ENCODE measurements at regions of chr12 and their contacts with region 1.

Region 1: DNA sequence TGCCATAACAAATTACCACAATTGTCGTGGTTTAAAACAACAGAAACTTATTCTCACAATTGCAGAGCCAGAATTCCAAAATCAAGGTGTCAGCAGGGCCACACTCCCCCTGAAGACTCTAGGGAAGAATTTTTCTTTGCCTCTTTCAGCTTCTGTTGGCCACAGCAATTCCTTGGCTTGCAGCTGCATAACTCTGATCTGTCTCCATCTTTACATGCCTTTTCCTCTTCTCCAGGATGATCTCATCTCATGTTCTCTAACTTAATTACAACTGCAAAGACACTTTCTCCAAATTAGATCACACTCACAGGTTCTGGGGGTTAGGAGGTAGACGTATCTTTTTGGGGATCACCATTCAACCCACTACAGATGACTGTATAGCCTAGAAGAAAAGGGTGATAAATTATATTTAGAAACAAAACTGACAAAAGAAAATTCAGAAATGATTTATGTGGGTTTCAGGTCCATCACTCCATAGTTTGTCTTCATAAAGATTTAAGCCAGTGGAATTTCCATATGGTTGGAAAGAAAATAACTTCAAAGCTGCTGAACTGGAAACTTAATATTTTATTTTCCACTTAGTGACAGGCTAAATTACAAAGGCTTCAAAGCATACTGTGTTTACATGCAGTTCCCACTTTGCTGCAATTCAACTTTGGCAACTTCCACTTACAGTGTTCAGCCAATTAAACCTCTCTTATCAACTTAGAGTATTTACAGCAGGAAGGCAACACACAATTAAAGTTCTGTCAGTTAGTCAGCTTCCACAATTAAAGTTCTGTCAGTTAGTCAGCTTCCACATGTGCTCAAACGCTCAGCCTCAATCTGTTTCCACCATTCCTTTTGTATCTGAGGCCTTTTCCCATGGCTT is 213.3 kb downstream of the EPS8 start:
- DNase-seq: no peak
- ATAC-seq: no peak
- H3K4me3 ChIP-seq: no peak overlapping the region
- H3K4me3 Mint-ChIP-seq: no peak overlapping the region
- H3K27ac ChIP-seq: no peak overlapping the region
- H3K27ac Mint-ChIP-seq: no peak overlapping the region
- H3K4me1 ChIP-seq: peaks cover 4% of the 10 kb centered on the region
- H3K4me1 Mint-ChIP-seq: peaks cover 24% of the 10 kb centered on the region
- H3K27me3 ChIP-seq: no peaks in the 10 kb centered on the region
- H3K27me3 Mint-ChIP-seq: no peaks in the 10 kb centered on the region
- CTCF ChIP-seq: no peak

Region 2: DNA sequence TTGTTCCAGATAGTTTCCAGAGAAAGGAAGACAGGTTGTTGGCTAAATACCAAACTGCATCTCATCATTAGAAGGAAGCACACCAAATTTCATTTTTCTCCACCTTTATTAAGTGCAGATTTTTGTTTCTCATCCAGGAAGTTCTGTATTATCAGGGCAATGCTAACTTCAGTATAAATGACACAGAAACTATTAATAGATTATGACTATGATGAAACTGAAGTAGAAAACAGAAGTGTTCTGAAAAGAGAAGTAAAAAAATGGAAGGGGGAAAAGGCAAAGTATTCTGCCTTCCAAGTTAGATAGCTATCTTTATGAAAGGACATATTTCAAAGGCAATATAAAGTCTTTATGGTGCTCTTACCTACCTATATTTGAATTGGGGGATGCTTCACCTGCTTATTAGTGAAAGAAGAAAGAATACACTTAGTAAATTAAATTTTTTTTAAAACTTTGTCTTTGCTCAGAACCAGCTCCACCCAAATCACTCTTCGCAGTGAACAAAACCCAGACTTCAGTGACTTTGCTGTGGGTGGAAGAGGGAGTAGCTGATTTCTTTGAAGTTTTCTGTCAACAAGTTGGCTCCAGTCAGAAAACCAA is 29.7 kb before region 1 on chr12:
- CTCF ChIA-PET with region 1: interaction called, 4 read pairs
- POLR2A ChIA-PET with region 1: interaction called, 84 read pairs
- intact Hi-C with region 1: no loop called
- DNase-seq: peak in 10 of 14 experiments; percentile 21 to 81 (median 45)
- ATAC-seq: peak; percentile 93
- H3K4me3 ChIP-seq: peak overlapping the region; percentile 19
- H3K4me3 Mint-ChIP-seq: peak overlapping the region; percentile 83
- H3K27ac ChIP-seq: peak overlapping the region; percentile 59 to 67
- H3K27ac Mint-ChIP-seq: peak overlapping the region; percentile 100
- H3K4me1 ChIP-seq: peaks cover 22% of the 10 kb centered on the region
- H3K4me1 Mint-ChIP-seq: peaks cover 85% of the 10 kb centered on the region
- H3K27me3 ChIP-seq: no peaks in the 10 kb centered on the region
- H3K27me3 Mint-ChIP-seq: no peaks in the 10 kb centered on the region
- CTCF ChIP-seq: no peak

Region 3: DNA sequence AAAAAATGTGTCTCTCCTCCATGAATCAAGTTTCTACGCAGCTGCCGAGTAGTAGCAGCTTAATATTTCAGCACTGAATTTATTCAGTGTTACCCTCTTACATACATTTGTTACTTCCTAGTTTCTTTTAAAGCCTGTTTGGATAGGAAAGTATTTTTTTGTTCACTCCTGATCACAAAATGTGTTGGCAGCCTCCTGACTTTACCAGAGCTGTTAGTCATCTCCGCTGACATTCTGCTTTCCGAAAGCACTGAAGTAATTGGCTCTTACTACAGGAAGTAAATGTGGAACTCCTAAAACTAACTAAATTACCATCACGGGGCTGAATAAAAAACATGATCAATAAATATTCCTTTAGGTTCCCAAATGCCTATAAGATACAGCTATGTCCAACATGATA is 12.2 kb before region 1 on chr12:
- CTCF ChIA-PET with region 1: interaction called, 4 read pairs
- POLR2A ChIA-PET with region 1: interaction called, 33 read pairs
- intact Hi-C with region 1: no loop called
- DNase-seq: peak in 4 of 14 experiments; percentile 57 to 72 (median 66)
- ATAC-seq: peak; percentile 85
- H3K4me3 ChIP-seq: peak overlapping the region; percentile 24
- H3K4me3 Mint-ChIP-seq: peak overlapping the region; percentile 56
- H3K27ac ChIP-seq: peak overlapping the region; percentile 64 to 76
- H3K27ac Mint-ChIP-seq: peak overlapping the region; percentile 85
- H3K4me1 ChIP-seq: peaks cover 10% of the 10 kb centered on the region
- H3K4me1 Mint-ChIP-seq: peaks cover 52% of the 10 kb centered on the region
- H3K27me3 ChIP-seq: no peaks in the 10 kb centered on the region
- H3K27me3 Mint-ChIP-seq: no peaks in the 10 kb centered on the region
- CTCF ChIP-seq: no peak

Measured in CD4-positive, alpha-beta T cell (primary cell).